Left lung (tissue), 14 donors: ENCODE measurements at regions of chr10 and their contacts with region 1.

Region 1: DNA sequence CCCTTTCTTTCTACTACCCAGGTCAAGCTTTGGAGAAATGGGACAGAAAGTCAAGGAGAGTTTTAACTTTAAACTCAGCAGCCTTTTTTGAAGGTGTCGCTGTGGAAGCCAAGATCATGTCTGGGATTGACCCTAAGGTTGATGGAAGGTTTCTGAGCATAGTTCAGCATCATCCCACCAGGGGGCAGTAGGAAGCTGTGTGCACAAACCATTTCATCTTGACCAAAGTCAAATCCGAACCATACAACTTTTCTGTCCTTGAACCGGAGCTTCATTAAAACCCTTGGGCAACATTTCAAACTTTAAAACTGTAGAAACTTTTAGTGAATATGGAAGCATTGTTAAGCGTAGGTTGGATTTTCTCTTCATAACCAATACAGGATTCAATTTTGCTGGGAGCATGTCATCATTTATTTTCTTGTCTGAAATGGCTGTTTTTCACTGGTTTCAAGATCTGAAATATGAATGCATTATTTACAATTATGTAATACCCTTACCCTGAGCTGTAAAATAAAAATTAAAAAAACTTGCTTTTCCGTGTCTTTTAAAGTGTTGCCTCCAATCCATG is 214.4 kb upstream of the KIAA1217 start:
- DNase-seq: peak in 2 of 4 donors; percentile 56 to 72
- ATAC-seq: peak; percentile 91
- H3K4me3 ChIP-seq: no peak overlapping the region
- H3K27ac ChIP-seq: no peak overlapping the region
- H3K4me1 ChIP-seq: no peaks in the 10 kb centered on the region
- H3K27me3 ChIP-seq: no peaks in the 10 kb centered on the region
- CTCF ChIP-seq: peak; percentile 68 to 77

Region 2: GRCh38 chr10:24202181-24202570 is 207.6 kb after region 1 on chr10:
- intact Hi-C with region 1: loop called (anchors 5 to 10 kb)
- DNase-seq: no peak
- ATAC-seq: peak; percentile 62
- H3K4me3 ChIP-seq: no peak overlapping the region
- H3K27ac ChIP-seq: no peak overlapping the region
- H3K4me1 ChIP-seq: peaks cover 0 to 4% of the 10 kb centered on the region in 2 donors
- H3K27me3 ChIP-seq: no peaks in the 10 kb centered on the region
- CTCF ChIP-seq: no peak

Region 3: GRCh38 chr10:24518981-24519597 is 524.5 kb after region 1 on chr10:
- intact Hi-C with region 1: loop called in 1 of 2 experiments (anchors 10 kb)
- DNase-seq: peak in 2 of 4 donors; percentile 56 to 74
- ATAC-seq: peak; percentile 91
- H3K4me3 ChIP-seq: no peak overlapping the region
- H3K27ac ChIP-seq: no peak overlapping the region
- H3K4me1 ChIP-seq: peaks cover 4 to 7% of the 10 kb centered on the region in 2 donors
- H3K27me3 ChIP-seq: no peaks in the 10 kb centered on the region
- CTCF ChIP-seq: peak; percentile 60 to 61